ENCODE measurements at regions of chr13 and their contacts with region 1.

Region 1: GRCh38 chr13:102460801-102461200 is 59.0 kb upstream of the FGF14 start:
- DNase-seq: no peak
- ATAC-seq: no peak
- H3K4me3 ChIP-seq: no peak overlapping the region
- H3K27ac ChIP-seq: no peak overlapping the region
- H3K4me1 ChIP-seq: no peaks in the 10 kb centered on the region
- H3K27me3 ChIP-seq: no peaks in the 10 kb centered on the region
- CTCF ChIP-seq: no peak
- POLR2A ChIP-seq: no peak

Region 2: DNA sequence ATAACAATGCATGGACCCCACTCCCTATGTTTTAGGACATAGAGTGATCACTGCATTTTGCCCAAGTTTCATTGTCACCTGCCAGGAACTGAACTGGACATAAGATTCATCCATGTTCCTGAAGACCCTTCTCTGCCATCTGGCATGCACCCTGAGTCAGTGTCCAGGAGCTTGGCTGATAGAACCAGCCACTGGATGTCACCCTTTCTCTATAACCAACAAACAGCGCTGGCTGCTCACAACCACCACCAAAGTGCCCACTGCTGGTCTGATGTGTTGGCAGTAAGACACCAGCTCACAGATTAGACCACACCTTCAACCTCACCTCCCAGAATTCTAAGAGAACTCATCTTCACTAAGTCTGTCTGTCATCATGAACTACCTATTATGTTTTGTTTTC is 674.9 kb before region 1 on chr13:
- intact Hi-C with region 1: loop called in 1 of 10 experiments (anchors 2 kb)
- DNase-seq: peak in 4 of 5 donors; percentile 21 to 42 (median 32)
- ATAC-seq: peak; percentile 77 to 94 (median 90)
- H3K4me3 ChIP-seq: no peak overlapping the region
- H3K27ac ChIP-seq: no peak overlapping the region
- H3K4me1 ChIP-seq: no peaks in the 10 kb centered on the region
- H3K27me3 ChIP-seq: no peaks in the 10 kb centered on the region
- CTCF ChIP-seq: peak in 11 of 12 donors; percentile 13 to 60 (median 44)
- POLR2A ChIP-seq: no peak

Region 3: GRCh38 chr13:101935828-101936227 is 525.0 kb before region 1 on chr13:
- intact Hi-C with region 1: loop called in 5 of 10 experiments (anchors 2 to 5 kb)
- DNase-seq: no peak
- ATAC-seq: no peak
- H3K4me3 ChIP-seq: no peak overlapping the region
- H3K27ac ChIP-seq: no peak overlapping the region
- H3K4me1 ChIP-seq: no peaks in the 10 kb centered on the region
- H3K27me3 ChIP-seq: no peaks in the 10 kb centered on the region
- CTCF ChIP-seq: no peak
- POLR2A ChIP-seq: no peak

Region 4: DNA sequence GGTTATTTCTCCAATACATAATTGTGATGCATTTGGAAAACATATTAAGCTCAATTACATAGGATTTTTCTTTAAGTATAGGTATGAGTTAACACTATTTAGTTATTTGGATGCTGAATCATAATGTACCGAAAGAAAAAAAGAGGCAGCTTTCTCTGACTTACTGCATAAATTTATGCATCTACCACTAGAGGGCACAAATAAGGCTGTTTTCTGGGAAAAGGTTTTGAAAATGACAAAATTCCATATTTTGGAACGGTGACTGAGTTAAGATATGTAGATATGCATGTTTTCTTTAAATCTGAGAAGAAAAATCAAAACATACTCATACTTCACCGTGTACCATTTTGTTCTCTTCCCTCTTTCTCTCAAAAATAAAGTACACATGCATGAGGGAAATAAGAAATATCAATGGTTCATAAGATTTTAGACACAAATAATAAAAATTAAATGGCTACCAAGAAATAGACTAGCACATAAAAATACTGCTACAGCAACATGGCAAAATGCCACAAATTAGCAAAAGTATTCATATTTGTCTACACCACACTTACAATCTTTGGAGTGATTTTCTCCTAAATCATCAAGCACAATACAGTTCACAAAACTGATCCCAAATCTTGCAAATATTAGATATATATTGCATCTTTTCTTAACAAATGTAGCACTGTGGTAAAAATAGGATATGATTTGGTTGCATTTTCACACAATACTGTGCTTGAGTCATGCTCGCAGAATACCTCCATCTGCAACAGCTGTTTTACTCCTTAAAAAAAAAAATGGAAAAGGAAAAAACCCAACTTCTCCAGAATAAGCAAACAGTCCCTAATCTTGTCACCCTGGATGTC is 319.0 kb before region 1 on chr13:
- intact Hi-C with region 1: loop called in 5 of 10 experiments (anchors 5 to 10 kb)
- DNase-seq: no peak
- ATAC-seq: peak in 1 of 4 donors; percentile 57
- H3K4me3 ChIP-seq: peak overlapping the region in 1 of 12 donors; percentile 2
- H3K27ac ChIP-seq: peak overlapping the region in 1 of 12 donors; percentile 24
- H3K4me1 ChIP-seq: peaks cover 0 to 17% (median 0%) of the 10 kb centered on the region in 12 donors
- H3K27me3 ChIP-seq: no peaks in the 10 kb centered on the region
- CTCF ChIP-seq: peak; percentile 49 to 80 (median 64)
- POLR2A ChIP-seq: no peak

Region 5: GRCh38 chr13:102197193-102197592 is 263.6 kb before region 1 on chr13:
- intact Hi-C with region 1: loop called in 5 of 10 experiments (anchors 5 to 10 kb)
- DNase-seq: no peak
- ATAC-seq: peak in 2 of 4 donors; percentile 52 to 56
- H3K4me3 ChIP-seq: no peak overlapping the region
- H3K27ac ChIP-seq: no peak overlapping the region
- H3K4me1 ChIP-seq: peaks cover 0 to 1% (median 0%) of the 10 kb centered on the region in 12 donors
- H3K27me3 ChIP-seq: no peaks in the 10 kb centered on the region
- CTCF ChIP-seq: peak in 7 of 12 donors; percentile 12 to 43 (median 34)
- POLR2A ChIP-seq: no peak

Region 6: GRCh38 chr13:102402290-102402689 is 58.5 kb before region 1 on chr13:
- intact Hi-C with region 1: loop called in 1 of 10 experiments (anchors 5 kb)
- DNase-seq: peak; percentile 29 to 53 (median 37)
- ATAC-seq: peak; percentile 49 to 75 (median 72)
- H3K4me3 ChIP-seq: peak overlapping the region in 11 of 12 donors; percentile 28 to 73 (median 63)
- H3K27ac ChIP-seq: peak overlapping the region in 2 of 12 donors; percentile 48 to 51
- H3K4me1 ChIP-seq: peaks cover 0 to 30% (median 0%) of the 10 kb centered on the region in 12 donors
- H3K27me3 ChIP-seq: peaks cover 0 to 47% (median 11%) of the 10 kb centered on the region in 9 donors
- CTCF ChIP-seq: peak in 4 of 12 donors; percentile 8 to 37 (median 16)
- POLR2A ChIP-seq: no peak

Region 7: DNA sequence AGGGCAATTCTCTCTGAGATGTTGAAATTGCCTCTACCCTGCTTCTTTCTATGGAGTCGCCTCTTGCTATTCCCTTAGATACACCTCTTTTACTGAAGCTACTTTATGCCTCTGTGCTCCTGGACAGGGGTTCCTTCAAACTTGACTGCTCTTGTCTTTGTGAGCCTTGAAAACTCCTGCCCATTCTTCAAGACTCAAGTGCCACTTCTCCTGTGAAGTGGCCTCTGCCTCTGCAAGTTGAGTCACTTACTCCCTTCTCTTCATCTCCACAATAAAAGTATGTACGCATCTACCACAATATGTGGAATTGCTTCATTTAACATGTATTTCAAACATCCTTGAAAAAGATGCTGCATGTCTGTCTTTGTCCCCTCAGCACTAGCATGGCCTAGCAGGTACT is 70.0 kb after region 1 on chr13:
- intact Hi-C with region 1: no loop called
- DNase-seq: no peak
- ATAC-seq: no peak
- H3K4me3 ChIP-seq: no peak overlapping the region
- H3K27ac ChIP-seq: no peak overlapping the region
- H3K4me1 ChIP-seq: no peaks in the 10 kb centered on the region
- H3K27me3 ChIP-seq: no peaks in the 10 kb centered on the region
- CTCF ChIP-seq: no peak
- POLR2A ChIP-seq: no peak

Region 8: GRCh38 chr13:103009051-103009840 is 548.4 kb after region 1 on chr13:
- intact Hi-C with region 1: no loop called
- DNase-seq: no peak
- ATAC-seq: no peak
- H3K4me3 ChIP-seq: no peak overlapping the region
- H3K27ac ChIP-seq: no peak overlapping the region
- H3K4me1 ChIP-seq: peaks cover 0 to 24% (median 0%) of the 10 kb centered on the region in 12 donors
- H3K27me3 ChIP-seq: no peaks in the 10 kb centered on the region
- CTCF ChIP-seq: no peak
- POLR2A ChIP-seq: no peak

Measured in heart left ventricle (tissue), 16 donors.